ENCODE measurements at regions of chr20 and their contacts with region 1.

Region 1: DNA sequence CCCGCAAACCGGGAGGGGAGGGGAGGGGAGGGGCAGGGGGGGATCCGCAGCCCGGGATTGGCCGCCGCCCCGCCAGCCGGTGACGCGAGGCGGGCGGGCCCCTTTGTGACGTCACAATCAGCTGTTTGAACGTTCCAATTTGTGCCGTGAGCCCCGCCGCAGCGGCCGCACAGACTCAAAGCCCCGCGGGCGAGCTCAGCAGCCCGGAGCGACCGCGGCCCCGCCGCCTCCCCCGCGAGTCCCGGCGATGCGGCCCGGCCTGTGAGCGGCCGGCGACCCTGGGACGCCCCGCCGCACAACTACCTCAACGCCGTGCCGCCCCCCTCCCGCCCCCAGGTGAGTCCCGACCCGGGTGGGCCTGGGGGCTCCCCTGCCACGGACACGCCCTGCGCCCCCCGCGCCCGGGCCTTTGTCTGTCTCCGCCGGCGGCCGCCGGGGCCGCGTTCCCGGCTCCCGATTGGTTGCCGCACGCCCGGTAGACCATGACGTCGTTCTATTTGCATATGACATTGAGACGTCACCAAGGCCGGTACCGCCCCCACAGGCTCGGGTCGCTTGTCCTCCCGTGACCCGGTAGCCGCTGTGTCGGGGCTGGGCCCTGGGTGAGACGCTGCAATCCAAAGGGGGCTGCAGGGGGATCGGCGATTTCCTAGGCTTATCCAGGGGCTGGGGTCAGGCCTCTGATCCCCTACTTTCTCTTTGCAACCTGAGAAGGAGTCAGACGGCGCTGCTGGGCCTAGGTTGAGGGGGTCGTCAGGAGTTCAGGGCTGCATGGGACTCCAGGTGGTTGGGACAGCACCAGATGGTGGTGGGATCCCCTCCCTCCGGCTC is at the start of gene TP53INP2:
- DNase-seq: peak; percentile 94
- H3K4me3 ChIP-seq: peak within 1 kb of the TSS; percentile 54 to 95 (median 78)
- H3K27ac ChIP-seq: peak within 1 kb of the TSS; percentile 54 to 86
- H3K4me1 ChIP-seq: peaks cover 0 to 23% (median 18%) of the 10 kb centered on the region in 4 experiments
- H3K27me3 ChIP-seq: peaks cover 0 to 12% (median 11%) of the 10 kb centered on the region in 5 experiments

Region 2: GRCh38 chr20:34544109-34544793 is 160.1 kb before region 1 on chr20:
- CTCF ChIA-PET with region 1: interaction called, 26 read pairs
- POLR2A ChIA-PET with region 1: interaction called, 5 read pairs
- DNase-seq: peak; percentile 36 to 65 (median 52)
- H3K4me3 ChIP-seq: peak overlapping the region in 5 of 7 experiments; percentile 43 to 73 (median 65)
- H3K27ac ChIP-seq: no peak overlapping the region
- H3K4me1 ChIP-seq: peaks cover 0 to 12% (median 3%) of the 10 kb centered on the region in 4 experiments
- H3K27me3 ChIP-seq: no peaks in the 10 kb centered on the region

Region 3: GRCh38 chr20:34562643-34563042 is 141.7 kb before region 1 on chr20:
- CTCF ChIA-PET with region 1: interaction called, 14 read pairs
- POLR2A ChIA-PET with region 1: interaction called, 3 read pairs
- DNase-seq: peak; percentile 43 to 61 (median 61)
- H3K4me3 ChIP-seq: no peak overlapping the region
- H3K27ac ChIP-seq: no peak overlapping the region
- H3K4me1 ChIP-seq: peaks cover 3 to 7% (median 6%) of the 10 kb centered on the region in 4 experiments
- H3K27me3 ChIP-seq: no peaks in the 10 kb centered on the region

Measured in common myeloid progenitor, CD34-positive (primary cell).